CD8-positive, alpha-beta T cell (primary cell): ENCODE measurements at regions of chr5 and their contacts with region 1.

Region 1: DNA sequence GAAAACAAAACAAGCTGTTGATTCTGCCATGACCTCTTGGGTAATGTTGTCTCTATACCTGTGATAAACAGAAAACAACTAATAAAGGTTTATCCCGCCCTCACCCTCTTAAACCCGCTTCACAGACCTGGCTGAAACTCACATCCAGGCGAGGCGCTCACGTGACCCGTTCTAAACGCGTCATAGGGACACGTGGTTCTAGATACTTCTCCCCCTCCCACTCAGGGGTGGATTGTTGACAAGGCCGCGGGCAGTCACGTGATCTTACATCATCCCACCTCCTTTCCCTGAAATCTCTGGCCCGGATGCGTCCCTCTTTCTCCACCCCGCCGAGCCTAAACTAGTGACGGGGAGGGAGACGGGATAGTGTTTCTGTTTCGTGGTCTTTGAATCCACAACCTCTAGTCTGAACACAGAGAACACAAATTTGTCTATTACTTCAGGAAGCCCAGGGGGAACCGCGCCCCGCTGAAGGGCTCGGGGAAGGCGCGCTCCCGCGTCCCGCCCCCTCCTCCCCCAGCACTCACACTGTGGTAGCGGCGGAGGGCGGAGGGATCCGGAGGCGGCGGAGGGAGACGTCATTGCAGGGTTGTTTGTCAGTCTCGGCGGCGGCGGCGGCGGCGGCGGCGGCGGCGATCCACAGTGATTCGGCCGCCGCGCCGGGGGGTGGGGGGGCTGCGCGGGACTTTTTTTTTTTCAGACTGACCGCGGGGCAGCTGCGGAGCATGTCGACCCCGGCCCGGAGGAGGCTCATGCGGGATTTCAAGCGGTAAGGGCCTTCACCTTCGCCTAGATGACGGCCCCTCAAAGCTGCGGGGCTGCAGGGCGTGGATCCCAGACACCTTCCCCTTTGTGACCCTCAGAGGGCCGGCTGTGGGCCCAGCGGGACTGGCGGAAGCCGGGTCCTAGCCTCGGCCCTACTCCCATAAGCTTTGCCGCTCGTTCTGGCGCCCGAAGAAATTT is at the start of gene UBE2B:
- DNase-seq: peak; percentile 93 to 100 (median 98)
- ATAC-seq: peak; percentile 72
- H3K4me3 ChIP-seq: peak within 1 kb of the TSS; percentile 88 to 100
- H3K4me3 Mint-ChIP-seq: peak within 1 kb of the TSS; percentile 91
- H3K27ac ChIP-seq: peak within 1 kb of the TSS; percentile 98 to 99
- H3K27ac Mint-ChIP-seq: peak within 1 kb of the TSS; percentile 99
- H3K4me1 ChIP-seq: peaks cover 39% of the 10 kb centered on the region
- H3K4me1 Mint-ChIP-seq: peaks cover 55% of the 10 kb centered on the region
- H3K27me3 ChIP-seq: no peaks in the 10 kb centered on the region
- H3K27me3 Mint-ChIP-seq: no peaks in the 10 kb centered on the region
- CTCF ChIP-seq: no peak
- total RNA-seq, gene UBE2B: 249 to 250 TPM

Region 2: GRCh38 chr5:133051580-133052332 is 1319.4 kb before region 1 on chr5 and contains the start of gene HSPA4:
- CTCF ChIA-PET with region 1: no interaction called
- POLR2A ChIA-PET with region 1: no interaction called
- intact Hi-C with region 1: loop called in 1 of 2 experiments (anchors 5 kb)
- DNase-seq: peak; percentile 93 to 100 (median 97)
- ATAC-seq: peak; percentile 89
- H3K4me3 ChIP-seq: peak within 1 kb of the TSS; percentile 88 to 100
- H3K4me3 Mint-ChIP-seq: peak within 1 kb of the TSS; percentile 99
- H3K27ac ChIP-seq: peak within 1 kb of the TSS; percentile 97
- H3K27ac Mint-ChIP-seq: peak within 1 kb of the TSS; percentile 100
- H3K4me1 ChIP-seq: peaks cover 46% of the 10 kb centered on the region
- H3K4me1 Mint-ChIP-seq: peaks cover 56% of the 10 kb centered on the region
- H3K27me3 ChIP-seq: no peaks in the 10 kb centered on the region
- H3K27me3 Mint-ChIP-seq: no peaks in the 10 kb centered on the region
- CTCF ChIP-seq: no peak
- total RNA-seq, gene HSPA4: 24.4 to 29.7 TPM

Region 3: GRCh38 chr5:134176511-134177368 is 194.4 kb before region 1 on chr5 and contains the start of gene SKP1:
- CTCF ChIA-PET with region 1: interaction called, 3 read pairs
- POLR2A ChIA-PET with region 1: interaction called, 4 read pairs
- intact Hi-C with region 1: loop called (anchors 2 kb)
- DNase-seq: peak; percentile 79 to 93 (median 85)
- ATAC-seq: peak; percentile 88
- H3K4me3 ChIP-seq: peak within 1 kb of the TSS; percentile 98 to 99
- H3K4me3 Mint-ChIP-seq: peak within 1 kb of the TSS; percentile 98
- H3K27ac ChIP-seq: peak within 1 kb of the TSS; percentile 98
- H3K27ac Mint-ChIP-seq: peak within 1 kb of the TSS; percentile 99
- H3K4me1 ChIP-seq: peaks cover 31% of the 10 kb centered on the region
- H3K4me1 Mint-ChIP-seq: peaks cover 34% of the 10 kb centered on the region
- H3K27me3 ChIP-seq: no peaks in the 10 kb centered on the region
- H3K27me3 Mint-ChIP-seq: no peaks in the 10 kb centered on the region
- CTCF ChIP-seq: no peak
- total RNA-seq, gene SKP1: 290 to 301 TPM

Region 4: GRCh38 chr5:134188092-134188491 is 183.1 kb before region 1 on chr5:
- CTCF ChIA-PET with region 1: no interaction called
- POLR2A ChIA-PET with region 1: no interaction called
- intact Hi-C with region 1: no loop called
- DNase-seq: no peak
- ATAC-seq: no peak
- H3K4me3 ChIP-seq: no peak overlapping the region
- H3K4me3 Mint-ChIP-seq: no peak overlapping the region
- H3K27ac ChIP-seq: no peak overlapping the region
- H3K27ac Mint-ChIP-seq: no peak overlapping the region
- H3K4me1 ChIP-seq: peaks cover 4% of the 10 kb centered on the region
- H3K4me1 Mint-ChIP-seq: no peaks in the 10 kb centered on the region
- H3K27me3 ChIP-seq: no peaks in the 10 kb centered on the region
- H3K27me3 Mint-ChIP-seq: no peaks in the 10 kb centered on the region
- CTCF ChIP-seq: no peak

Region 5: DNA sequence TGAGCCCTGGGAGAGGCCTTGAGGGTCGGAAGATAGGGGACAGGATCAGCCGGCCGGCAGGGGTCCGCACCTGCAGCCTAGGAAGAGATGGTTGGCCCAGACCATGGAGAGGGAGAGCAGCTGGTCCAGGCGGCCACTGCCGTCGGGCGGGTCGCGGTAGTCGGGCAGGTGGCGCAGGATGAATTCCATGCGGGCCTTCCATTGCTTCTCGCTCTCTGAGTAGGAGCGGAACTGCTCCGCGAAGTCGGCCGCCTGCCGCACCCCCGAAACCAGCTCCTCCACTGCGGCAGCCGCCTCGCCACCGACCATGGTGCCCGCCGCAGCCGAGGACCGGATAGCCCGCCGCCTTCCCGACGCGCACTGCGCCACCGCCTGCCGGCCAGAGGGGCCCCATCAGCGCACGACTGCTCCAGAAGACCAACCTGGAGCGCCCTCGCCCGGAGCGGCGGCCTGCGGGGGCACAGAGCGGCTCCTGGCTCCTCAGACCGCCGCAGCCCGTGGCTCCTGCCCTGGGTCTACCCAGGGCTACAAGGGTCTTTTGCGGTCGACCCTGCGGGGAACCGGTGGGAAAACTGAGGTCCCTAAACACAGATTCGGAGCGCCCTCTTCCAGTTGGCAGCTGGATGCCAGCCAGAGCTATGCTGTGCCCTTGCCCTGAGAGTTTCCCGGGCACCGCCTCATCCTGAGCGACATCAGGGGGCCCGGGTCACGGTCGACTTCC is 40.6 kb after region 1 on chr5 and contains the start of gene CDKN2AIPNL:
- CTCF ChIA-PET with region 1: interaction called, 6 read pairs
- POLR2A ChIA-PET with region 1: interaction called, 25 read pairs
- intact Hi-C with region 1: loop called (anchors 1 kb)
- DNase-seq: peak; percentile 81 to 95 (median 91)
- ATAC-seq: peak; percentile 99
- H3K4me3 ChIP-seq: peak within 1 kb of the TSS; percentile 77 to 84
- H3K4me3 Mint-ChIP-seq: peak within 1 kb of the TSS; percentile 90
- H3K27ac ChIP-seq: peak within 1 kb of the TSS; percentile 65 to 66
- H3K27ac Mint-ChIP-seq: peak within 1 kb of the TSS; percentile 90
- H3K4me1 ChIP-seq: peaks cover 23% of the 10 kb centered on the region
- H3K4me1 Mint-ChIP-seq: peaks cover 38% of the 10 kb centered on the region
- H3K27me3 ChIP-seq: no peaks in the 10 kb centered on the region
- H3K27me3 Mint-ChIP-seq: no peaks in the 10 kb centered on the region
- CTCF ChIP-seq: peak; percentile 73
- total RNA-seq, gene CDKN2AIPNL: 14.7 to 15.5 TPM

Region 6: GRCh38 chr5:134637161-134637582 is 266.0 kb after region 1 on chr5:
- CTCF ChIA-PET with region 1: no interaction called
- POLR2A ChIA-PET with region 1: no interaction called
- intact Hi-C with region 1: loop called (anchors 1 to 2 kb)
- DNase-seq: no peak
- ATAC-seq: no peak
- H3K4me3 ChIP-seq: no peak overlapping the region
- H3K4me3 Mint-ChIP-seq: no peak overlapping the region
- H3K27ac ChIP-seq: no peak overlapping the region
- H3K27ac Mint-ChIP-seq: no peak overlapping the region
- H3K4me1 ChIP-seq: no peaks in the 10 kb centered on the region
- H3K4me1 Mint-ChIP-seq: peaks cover under 1% of the 10 kb centered on the region
- H3K27me3 ChIP-seq: no peaks in the 10 kb centered on the region
- H3K27me3 Mint-ChIP-seq: no peaks in the 10 kb centered on the region
- CTCF ChIP-seq: no peak

Region 7: GRCh38 chr5:134738133-134738962 is 367.2 kb after region 1 on chr5 and contains the start of gene CAMLG:
- CTCF ChIA-PET with region 1: no interaction called
- POLR2A ChIA-PET with region 1: interaction called, 6 read pairs
- intact Hi-C with region 1: loop called (anchors 1 to 5 kb)
- DNase-seq: peak; percentile 94 to 99 (median 97)
- ATAC-seq: peak; percentile 97
- H3K4me3 ChIP-seq: peak within 1 kb of the TSS; percentile 89 to 91
- H3K4me3 Mint-ChIP-seq: peak within 1 kb of the TSS; percentile 86
- H3K27ac ChIP-seq: peak within 1 kb of the TSS; percentile 79 to 92
- H3K27ac Mint-ChIP-seq: peak within 1 kb of the TSS; percentile 95
- H3K4me1 ChIP-seq: peaks cover 20% of the 10 kb centered on the region
- H3K4me1 Mint-ChIP-seq: peaks cover 35% of the 10 kb centered on the region
- H3K27me3 ChIP-seq: no peaks in the 10 kb centered on the region
- H3K27me3 Mint-ChIP-seq: no peaks in the 10 kb centered on the region
- CTCF ChIP-seq: peak; percentile 81
- total RNA-seq, gene CAMLG: 52.3 to 56.2 TPM